Vagina (tissue), 2 donors: ENCODE measurements at regions of chr2 and their contacts with region 1.

Region 1: GRCh38 chr2:202436626-202437025 is 60.5 kb downstream of the BMPR2 start:
- DNase-seq: no peak
- H3K4me3 ChIP-seq: no peak overlapping the region
- H3K27ac ChIP-seq: no peak overlapping the region
- H3K4me1 ChIP-seq: peaks cover 7% of the 10 kb centered on the region
- H3K27me3 ChIP-seq: no peaks in the 10 kb centered on the region
- CTCF ChIP-seq: no peak
- POLR2A ChIP-seq: no peak

Region 2: DNA sequence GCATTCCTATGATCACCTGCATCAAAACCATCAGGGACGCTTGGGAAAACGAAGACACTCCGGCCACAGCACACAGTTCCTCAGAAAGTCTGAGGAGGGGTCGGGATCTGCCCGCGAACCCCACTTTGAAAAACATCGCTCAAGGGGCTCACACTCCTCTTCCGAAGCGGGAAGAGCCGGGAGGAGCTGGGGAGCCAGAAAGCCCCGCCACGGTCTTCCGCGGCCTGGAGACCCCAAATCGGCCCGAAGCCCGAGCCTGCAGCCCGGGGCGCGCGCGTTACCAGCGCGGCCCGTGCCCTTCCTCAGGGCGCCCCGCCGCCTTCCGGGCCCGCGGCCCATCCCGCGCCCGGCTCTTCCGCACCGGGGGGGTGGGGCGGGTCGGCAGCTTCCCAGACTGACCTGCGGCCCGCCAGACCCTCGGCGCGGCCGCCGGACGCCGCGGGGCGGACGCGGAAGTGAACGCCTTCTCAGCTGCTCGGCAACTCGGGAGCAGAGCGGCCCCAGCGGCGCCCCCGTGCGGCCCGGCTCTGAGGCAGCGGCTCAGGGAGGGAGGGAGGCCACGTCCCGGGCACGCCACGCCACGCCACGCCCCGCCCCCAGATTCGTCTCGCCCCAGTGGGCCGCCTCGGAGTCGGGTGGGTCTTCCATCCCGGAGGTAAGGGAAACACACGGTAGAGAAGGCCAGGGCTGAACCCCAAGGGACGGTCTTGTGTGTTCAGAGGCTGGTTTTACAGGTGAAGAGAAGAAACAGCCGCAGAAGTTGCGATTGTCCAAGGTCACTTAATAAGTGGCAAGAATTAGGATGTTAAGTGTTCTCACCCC is 1926.8 kb before region 1 on chr2 and contains the start of gene KCTD18:
- intact Hi-C with region 1: loop called (anchors 5 kb)
- DNase-seq: no peak
- H3K4me3 ChIP-seq: peak within 1 kb of the TSS; percentile 69 to 88
- H3K27ac ChIP-seq: peak within 1 kb of the TSS; percentile 90
- H3K4me1 ChIP-seq: peaks cover 11% of the 10 kb centered on the region
- H3K27me3 ChIP-seq: no peaks in the 10 kb centered on the region
- CTCF ChIP-seq: peak; percentile 62 to 74 (median 73)
- POLR2A ChIP-seq: peak in 1 of 2 donors; percentile 82
- total RNA-seq, gene KCTD18: 16.9 TPM